ENCODE measurements at regions of chr16 and their contacts with region 1.

Region 1: GRCh38 chr16:83989285-83989684 is 21.2 kb downstream of the NECAB2 start:
- DNase-seq: no peak
- H3K4me3 ChIP-seq: no peak overlapping the region
- H3K27ac ChIP-seq: no peak overlapping the region
- H3K4me1 ChIP-seq: no peaks in the 10 kb centered on the region
- H3K27me3 ChIP-seq: no peaks in the 10 kb centered on the region
- CTCF ChIP-seq: no peak

Region 2: GRCh38 chr16:84247844-84248243 is 258.6 kb after region 1 on chr16:
- intact Hi-C with region 1: loop called (anchors 10 kb)
- DNase-seq: no peak
- H3K4me3 ChIP-seq: no peak overlapping the region
- H3K27ac ChIP-seq: no peak overlapping the region
- H3K4me1 ChIP-seq: no peaks in the 10 kb centered on the region
- H3K27me3 ChIP-seq: no peaks in the 10 kb centered on the region
- CTCF ChIP-seq: no peak

Measured in colonic mucosa (tissue), 4 donors.